ENCODE measurements at regions of chr1 and their contacts with region 1.

Region 1: DNA sequence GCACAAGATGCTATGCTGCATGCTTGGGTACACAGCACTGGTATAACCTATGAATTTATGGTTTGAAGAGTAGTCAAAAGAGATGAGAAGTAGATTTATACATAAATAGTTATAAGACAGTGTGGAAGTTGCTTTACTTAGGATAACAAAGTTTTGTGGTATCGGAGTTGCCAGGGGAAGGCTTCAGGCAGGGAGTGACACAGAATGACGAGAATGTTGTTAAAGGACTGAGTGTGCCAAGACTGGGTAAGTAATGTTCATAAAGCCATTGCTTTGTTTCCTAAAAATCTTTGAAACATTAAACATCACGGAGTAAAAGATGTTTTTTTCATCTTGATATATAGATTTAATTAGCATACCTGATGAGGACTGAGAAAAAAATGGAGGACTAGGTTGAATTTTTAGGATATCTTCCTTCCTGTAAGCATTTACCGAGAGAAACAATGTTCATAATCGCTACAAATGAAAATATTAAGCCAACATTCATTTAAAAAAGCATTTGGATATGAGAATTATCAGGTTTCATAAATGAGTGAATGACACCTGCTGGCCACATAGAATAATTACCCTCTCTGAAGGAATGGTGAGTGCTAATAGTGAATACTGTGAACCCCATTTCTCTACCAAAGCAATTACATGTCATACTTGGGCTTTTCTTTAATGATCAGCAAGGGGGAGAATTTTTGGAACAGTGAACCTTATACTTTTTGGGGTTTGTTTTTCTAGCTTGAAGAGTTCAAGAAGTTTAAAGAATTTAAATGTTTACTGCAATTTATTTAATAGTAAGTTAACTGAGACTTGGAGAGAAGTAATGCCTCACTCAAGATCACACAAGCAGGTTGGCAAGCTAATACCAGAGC is 28.4 kb downstream of the EXTL2 start:
- DNase-seq: no peak
- H3K4me3 ChIP-seq: no peak overlapping the region
- H3K27ac ChIP-seq: no peak overlapping the region
- H3K27me3 ChIP-seq: peaks cover 0 to 2% (median 0%) of the 10 kb centered on the region in 45 donors
- CTCF ChIP-seq: peak; percentile 41 to 81 (median 62)

Region 2: GRCh38 chr1:99808391-99809115 is 1057.7 kb before region 1 on chr1:
- intact Hi-C with region 1: loop called (anchors 10 kb)
- DNase-seq: peak in 1 of 10 donors; percentile 8
- H3K4me3 ChIP-seq: peak overlapping the region in 30 of 59 donors; percentile 3 to 46 (median 24)
- H3K27ac ChIP-seq: peak overlapping the region in 1 of 59 donors; percentile 24
- H3K27me3 ChIP-seq: peaks cover 0 to 14% (median 0%) of the 10 kb centered on the region in 45 donors
- CTCF ChIP-seq: peak; percentile 64 to 90 (median 77)

Region 3: DNA sequence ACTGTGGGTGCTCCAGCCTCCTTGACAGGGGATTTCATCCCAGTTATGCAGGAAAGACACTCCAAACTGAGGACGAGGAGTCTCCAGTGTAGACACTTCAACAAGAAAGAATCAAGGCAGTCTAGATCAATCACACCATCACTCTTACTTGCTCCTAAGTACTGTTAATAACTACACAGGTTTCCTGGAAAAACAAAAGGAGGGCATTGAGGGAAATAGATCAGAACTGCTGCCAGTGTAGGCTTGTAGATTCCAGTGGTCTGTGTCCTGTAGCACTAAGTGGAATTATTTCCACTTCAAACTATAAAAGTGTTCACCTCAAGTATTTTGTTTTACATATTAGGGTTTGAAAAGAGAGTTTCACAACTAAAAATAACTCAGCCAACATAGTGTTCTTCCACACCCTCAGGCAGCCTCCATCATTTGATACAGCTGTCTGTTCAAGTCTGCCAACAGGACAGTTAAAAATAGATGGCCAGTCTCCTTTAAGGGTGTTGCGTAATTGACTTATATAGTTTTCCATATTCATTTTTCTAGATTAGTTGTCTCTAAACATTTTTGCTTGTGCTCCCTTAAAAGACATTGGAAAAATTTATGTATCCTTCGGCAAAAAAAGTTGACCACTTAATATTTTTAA is 1048.1 kb before region 1 on chr1:
- intact Hi-C with region 1: loop called in 1 of 2 experiments (anchors 10 kb)
- DNase-seq: no peak
- H3K4me3 ChIP-seq: no peak overlapping the region
- H3K27ac ChIP-seq: no peak overlapping the region
- H3K27me3 ChIP-seq: peaks cover 0 to 3% (median 0%) of the 10 kb centered on the region in 45 donors
- CTCF ChIP-seq: no peak